Calu3 (cell line): ENCODE measurements at regions of chr7 and their contacts with region 1.

Region 1: GRCh38 chr7:80288175-80289122 is 153.8 kb downstream of the GNAI1 start:
- DNase-seq: no peak
- H3K4me3 Mint-ChIP-seq: no peak overlapping the region
- H3K27ac Mint-ChIP-seq: no peak overlapping the region
- H3K4me1 Mint-ChIP-seq: no peaks in the 10 kb centered on the region
- H3K27me3 Mint-ChIP-seq: no peaks in the 10 kb centered on the region
- CTCF ChIP-seq: no peak

Region 2: GRCh38 chr7:80060218-80060806 is 228.1 kb before region 1 on chr7:
- CTCF ChIA-PET with region 1: no interaction called
- intact Hi-C with region 1: loop called (anchors 1 kb)
- DNase-seq: no peak
- H3K4me3 Mint-ChIP-seq: no peak overlapping the region
- H3K27ac Mint-ChIP-seq: no peak overlapping the region
- H3K4me1 Mint-ChIP-seq: no peaks in the 10 kb centered on the region
- H3K27me3 Mint-ChIP-seq: no peaks in the 10 kb centered on the region
- CTCF ChIP-seq: peak; percentile 15

Region 3: DNA sequence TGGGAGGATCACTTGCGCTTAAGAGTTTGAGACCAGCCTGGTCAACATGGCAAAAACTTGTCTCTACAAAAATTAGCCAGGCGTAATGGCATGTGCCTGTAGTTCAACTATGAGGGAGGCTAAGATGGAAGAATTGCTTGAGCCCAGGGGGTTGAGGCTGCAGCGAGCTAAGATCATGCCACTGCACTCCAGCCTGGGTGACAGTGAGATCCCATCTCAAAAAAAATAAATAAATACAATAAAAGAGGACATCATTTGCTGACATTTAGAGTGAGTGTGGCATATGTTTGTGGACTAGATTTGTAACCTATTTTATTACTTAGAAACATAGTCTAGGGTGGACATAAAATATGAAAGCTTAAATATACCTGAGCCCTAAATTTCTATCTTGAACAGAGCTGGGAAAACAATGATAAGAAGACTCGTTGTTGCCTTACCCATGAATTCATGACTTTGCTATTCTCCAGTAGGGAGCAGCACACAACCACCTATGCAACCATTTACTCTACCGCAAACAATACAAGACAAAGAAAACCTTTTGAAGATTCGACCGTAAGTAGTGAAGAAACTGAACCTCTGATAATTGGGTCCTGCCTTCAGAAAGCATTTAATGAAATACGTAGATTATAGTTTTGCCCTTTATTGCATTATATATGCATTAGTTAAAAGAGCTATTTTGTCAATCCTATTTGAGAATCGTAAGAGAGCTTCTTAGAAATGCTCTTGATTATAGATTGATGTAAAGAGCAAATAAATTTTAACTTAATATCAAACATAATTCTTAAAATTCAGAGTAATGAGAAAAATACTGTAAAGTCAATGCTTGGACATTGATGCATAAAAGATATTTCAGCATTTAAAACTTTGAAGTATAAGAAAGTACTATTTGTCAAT is 140.0 kb after region 1 on chr7:
- CTCF ChIA-PET with region 1: no interaction called
- intact Hi-C with region 1: no loop called
- DNase-seq: peak; percentile 13
- H3K4me3 Mint-ChIP-seq: no peak overlapping the region
- H3K27ac Mint-ChIP-seq: no peak overlapping the region
- H3K4me1 Mint-ChIP-seq: no peaks in the 10 kb centered on the region
- H3K27me3 Mint-ChIP-seq: no peaks in the 10 kb centered on the region
- CTCF ChIP-seq: peak; percentile 32